CD4-positive, alpha-beta T cell (primary cell): ENCODE measurements at regions of chr7 and their contacts with region 1.

Region 1: GRCh38 chr7:94509879-94510581 is 421 bp downstream of the CASD1 start:
- DNase-seq: peak; percentile 43 to 87 (median 60)
- ATAC-seq: peak; percentile 81
- H3K4me3 ChIP-seq: peak overlapping the region; percentile 70
- H3K4me3 Mint-ChIP-seq: peak overlapping the region; percentile 92
- H3K27ac ChIP-seq: peak overlapping the region; percentile 70 to 73
- H3K27ac Mint-ChIP-seq: no peak overlapping the region
- H3K4me1 ChIP-seq: peaks cover 29% of the 10 kb centered on the region
- H3K4me1 Mint-ChIP-seq: peaks cover 49% of the 10 kb centered on the region
- H3K27me3 ChIP-seq: no peaks in the 10 kb centered on the region
- H3K27me3 Mint-ChIP-seq: no peaks in the 10 kb centered on the region
- CTCF ChIP-seq: peak; percentile 13

Region 2: DNA sequence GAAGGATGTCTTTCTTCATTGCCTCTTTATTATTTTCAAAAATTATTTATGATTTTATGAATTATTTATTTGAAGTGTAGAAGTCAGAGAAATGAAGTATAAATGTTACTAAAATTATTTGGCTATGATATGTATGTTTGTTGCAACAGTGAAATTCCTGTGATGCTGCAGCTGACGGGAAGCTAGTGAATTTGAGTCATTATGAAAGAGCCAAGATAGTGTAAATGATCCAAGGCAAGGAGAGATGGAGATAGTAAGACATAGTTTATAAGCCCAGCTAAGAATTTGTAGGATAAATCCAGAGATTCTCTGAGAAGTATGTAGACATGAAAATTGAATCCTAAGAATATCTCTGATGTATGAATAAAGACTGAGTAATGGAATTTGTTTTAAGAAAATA is 30.4 kb after region 1 on chr7:
- CTCF ChIA-PET with region 1: no interaction called
- POLR2A ChIA-PET with region 1: no interaction called
- intact Hi-C with region 1: no loop called
- DNase-seq: no peak
- ATAC-seq: no peak
- H3K4me3 ChIP-seq: no peak overlapping the region
- H3K4me3 Mint-ChIP-seq: no peak overlapping the region
- H3K27ac ChIP-seq: no peak overlapping the region
- H3K27ac Mint-ChIP-seq: no peak overlapping the region
- H3K4me1 ChIP-seq: no peaks in the 10 kb centered on the region
- H3K4me1 Mint-ChIP-seq: no peaks in the 10 kb centered on the region
- H3K27me3 ChIP-seq: no peaks in the 10 kb centered on the region
- H3K27me3 Mint-ChIP-seq: no peaks in the 10 kb centered on the region
- CTCF ChIP-seq: no peak

Region 3: DNA sequence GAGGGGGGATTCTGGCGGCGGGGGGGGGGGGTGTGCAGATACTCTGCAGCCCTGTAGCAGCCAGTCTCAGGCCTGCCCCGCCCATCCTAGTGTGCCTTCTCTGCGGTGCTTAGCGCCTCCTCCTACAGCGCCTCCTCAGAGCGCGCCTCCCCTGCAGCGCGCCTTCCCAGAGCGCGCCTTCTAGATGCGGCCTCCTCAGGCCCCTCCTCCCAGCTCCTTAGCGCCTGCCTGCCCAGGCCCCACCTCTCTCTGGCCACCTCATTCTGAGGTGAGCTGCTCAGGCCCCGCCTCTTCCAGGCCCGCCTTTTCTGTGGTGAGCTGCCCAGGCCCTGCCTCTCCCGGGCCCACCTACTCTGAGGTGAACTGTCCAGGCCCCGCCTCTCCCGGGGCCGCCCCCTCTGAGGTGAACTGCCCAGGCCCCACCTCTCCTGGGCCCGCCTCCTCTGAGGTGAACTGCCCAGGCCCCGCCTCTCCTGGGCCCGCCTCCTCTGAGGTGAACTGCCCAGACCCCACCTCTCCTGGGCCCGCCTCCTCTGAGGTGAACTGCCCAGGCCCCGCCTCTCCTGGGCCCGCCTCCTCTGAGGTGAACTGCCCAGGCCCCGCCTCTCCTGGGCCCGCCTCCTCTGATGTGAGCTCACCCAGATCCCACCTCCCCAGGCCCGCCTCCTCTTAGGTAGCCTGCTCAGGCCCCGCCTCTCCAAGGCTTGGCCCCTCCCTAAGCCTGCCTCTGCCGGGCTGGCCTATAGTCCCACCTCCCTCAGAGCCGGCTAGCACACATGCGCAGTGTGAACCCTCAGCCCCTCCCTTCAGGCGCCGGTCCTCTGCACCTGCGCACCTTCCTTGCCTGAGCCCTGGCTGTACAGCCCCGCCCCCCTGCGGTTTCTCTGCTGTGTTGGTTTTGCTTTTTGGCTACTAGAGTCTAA is 148.0 kb after region 1 on chr7:
- CTCF ChIA-PET with region 1: no interaction called
- POLR2A ChIA-PET with region 1: interaction called, 4 read pairs
- intact Hi-C with region 1: loop called (anchors 5 to 10 kb)
- DNase-seq: peak; percentile 91 to 97 (median 94)
- ATAC-seq: peak; percentile 79
- H3K4me3 ChIP-seq: peak overlapping the region; percentile 63
- H3K4me3 Mint-ChIP-seq: peak overlapping the region; percentile 86
- H3K27ac ChIP-seq: no peak overlapping the region
- H3K27ac Mint-ChIP-seq: peak overlapping the region; percentile 63
- H3K4me1 ChIP-seq: peaks cover 29% of the 10 kb centered on the region
- H3K4me1 Mint-ChIP-seq: peaks cover 21% of the 10 kb centered on the region
- H3K27me3 ChIP-seq: peaks cover 15 to 26% of the 10 kb centered on the region in 2 experiments
- H3K27me3 Mint-ChIP-seq: peaks cover 34% of the 10 kb centered on the region
- CTCF ChIP-seq: no peak